Naive thymus-derived CD8-positive, alpha-beta T cell (primary cell): ENCODE measurements at regions of chr19 and their contacts with region 1.

Region 1: DNA sequence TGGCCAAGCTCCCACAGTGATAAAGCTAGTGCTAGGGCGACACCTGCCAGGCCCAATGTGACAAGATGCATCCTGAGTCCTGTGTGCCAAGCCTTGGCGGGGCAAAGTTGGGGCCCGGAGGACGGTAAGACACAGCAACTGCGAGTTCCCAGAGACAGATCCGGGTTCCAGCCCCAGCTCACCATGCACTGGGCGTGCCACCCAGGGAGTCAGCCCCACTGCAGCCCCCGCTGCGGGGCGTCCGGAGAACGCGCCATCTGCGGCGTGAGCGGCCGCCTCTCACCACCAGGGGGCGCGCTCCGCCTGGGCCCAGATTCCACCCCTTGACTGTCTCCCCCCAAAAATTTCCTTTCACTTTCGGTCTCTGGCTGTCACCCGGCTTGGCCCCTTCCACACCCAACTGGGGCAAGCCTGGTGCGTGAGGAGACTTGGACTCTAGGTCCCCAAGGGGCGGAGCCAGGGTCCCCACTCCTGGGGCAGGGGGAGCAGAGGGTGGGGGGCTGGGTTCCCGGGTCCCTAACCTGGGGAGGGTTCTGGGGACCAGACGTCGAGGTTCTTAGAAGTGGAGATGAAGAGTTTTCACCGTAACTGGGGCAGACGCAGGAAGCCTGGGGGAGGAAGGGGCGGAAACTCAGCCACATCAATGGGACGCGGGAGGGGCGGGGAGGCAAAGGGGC is at the start of gene FLT3LG:
- DNase-seq: peak; percentile 87 to 98 (median 94)
- ATAC-seq: peak; percentile 46 to 62
- H3K4me3 Mint-ChIP-seq: peak within 1 kb of the TSS; percentile 93 to 99 (median 96)
- H3K27ac Mint-ChIP-seq: peak within 1 kb of the TSS; percentile 92 to 100 (median 98)
- H3K4me1 Mint-ChIP-seq: peaks cover 28 to 72% (median 65%) of the 10 kb centered on the region in 4 donors
- H3K27me3 Mint-ChIP-seq: no peaks in the 10 kb centered on the region
- polyA plus RNA-seq, gene FLT3LG: 108 to 205 (median 166) TPM

Region 2: DNA sequence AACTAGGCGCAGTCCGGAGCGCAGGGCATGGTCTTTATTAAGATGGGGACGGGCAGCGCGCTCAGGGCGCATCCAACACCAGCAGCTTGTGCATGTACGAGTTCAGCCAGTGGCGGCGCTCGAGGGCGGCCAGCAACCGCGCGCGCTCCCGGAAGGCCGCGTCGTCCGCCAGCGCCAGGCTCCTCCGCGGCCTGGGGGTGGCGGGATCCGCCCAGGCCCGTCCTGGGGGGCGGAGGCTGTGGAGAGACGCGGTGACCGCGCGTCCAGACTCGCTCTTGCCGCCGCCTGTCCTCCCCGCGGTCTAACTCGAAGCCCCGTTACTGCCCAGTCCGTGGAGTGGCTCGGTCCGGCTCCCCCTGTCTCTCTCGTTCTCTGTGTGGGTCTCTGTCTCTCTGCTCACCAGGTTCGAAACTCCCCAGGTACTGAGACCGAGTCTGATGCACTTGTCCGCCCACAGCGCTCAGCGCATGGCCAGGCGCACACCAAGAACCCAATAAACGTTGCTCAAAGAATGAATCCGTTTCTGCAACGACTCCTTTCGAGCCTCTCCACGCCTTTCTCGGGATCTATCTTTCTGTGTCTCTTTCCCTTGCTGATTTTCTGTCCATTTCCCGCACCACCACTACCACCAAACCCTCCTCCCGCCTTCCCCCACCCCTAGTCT is 51.5 kb before region 1 on chr19:
- POLR2A ChIA-PET with region 1: no interaction called
- DNase-seq: peak in 4 of 10 donors; percentile 21 to 51 (median 46)
- ATAC-seq: peak; percentile 40 to 45
- H3K4me3 Mint-ChIP-seq: peak overlapping the region; percentile 69 to 91 (median 78)
- H3K27ac Mint-ChIP-seq: peak overlapping the region in 3 of 10 donors; percentile 7 to 86 (median 74)
- H3K4me1 Mint-ChIP-seq: peaks cover 45 to 62% (median 53%) of the 10 kb centered on the region in 4 donors
- H3K27me3 Mint-ChIP-seq: peaks cover 55 to 100% (median 82%) of the 10 kb centered on the region in 5 donors

Region 3: GRCh38 chr19:49487277-49488045 is 13.5 kb after region 1 on chr19 and contains the start of gene RPL13A:
- POLR2A ChIA-PET with region 1: interaction called, 60 read pairs
- DNase-seq: peak; percentile 98 to 100 (median 99)
- ATAC-seq: peak; percentile 85 to 91
- H3K4me3 Mint-ChIP-seq: peak within 1 kb of the TSS; percentile 89 to 99 (median 97)
- H3K27ac Mint-ChIP-seq: peak within 1 kb of the TSS; percentile 94 to 99 (median 97)
- H3K4me1 Mint-ChIP-seq: peaks cover 9 to 57% (median 45%) of the 10 kb centered on the region in 4 donors
- H3K27me3 Mint-ChIP-seq: peaks cover 0 to 3% (median 0%) of the 10 kb centered on the region in 5 donors
- polyA plus RNA-seq, gene RPL13A: 3,162 to 3,664 (median 3,630) TPM

Region 4: DNA sequence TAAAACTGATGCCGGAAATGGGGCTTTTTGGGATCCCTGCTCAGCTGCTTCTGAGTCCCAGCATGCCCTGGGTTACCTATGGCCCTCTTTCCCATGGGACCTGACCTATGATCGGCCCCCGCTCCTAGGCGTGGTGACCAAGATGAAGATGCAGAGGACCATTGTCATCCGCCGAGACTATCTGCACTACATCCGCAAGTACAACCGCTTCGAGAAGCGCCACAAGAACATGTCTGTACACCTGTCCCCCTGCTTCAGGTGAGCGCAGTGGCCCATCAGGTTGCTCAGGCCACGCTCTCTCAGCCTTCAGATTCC is 23.7 kb after region 1 on chr19:
- POLR2A ChIA-PET with region 1: no interaction called
- DNase-seq: no peak
- ATAC-seq: no peak
- H3K4me3 Mint-ChIP-seq: peak overlapping the region; percentile 96 to 100 (median 100)
- H3K27ac Mint-ChIP-seq: peak overlapping the region; percentile 96 to 100 (median 99)
- H3K4me1 Mint-ChIP-seq: peaks cover 19 to 79% (median 67%) of the 10 kb centered on the region in 4 donors
- H3K27me3 Mint-ChIP-seq: peaks cover 0 to 2% (median 0%) of the 10 kb centered on the region in 5 donors